Posterior cingulate gyrus (tissue), 11 donors: ENCODE measurements at regions of chr1 and their contacts with region 1.

Region 1: DNA sequence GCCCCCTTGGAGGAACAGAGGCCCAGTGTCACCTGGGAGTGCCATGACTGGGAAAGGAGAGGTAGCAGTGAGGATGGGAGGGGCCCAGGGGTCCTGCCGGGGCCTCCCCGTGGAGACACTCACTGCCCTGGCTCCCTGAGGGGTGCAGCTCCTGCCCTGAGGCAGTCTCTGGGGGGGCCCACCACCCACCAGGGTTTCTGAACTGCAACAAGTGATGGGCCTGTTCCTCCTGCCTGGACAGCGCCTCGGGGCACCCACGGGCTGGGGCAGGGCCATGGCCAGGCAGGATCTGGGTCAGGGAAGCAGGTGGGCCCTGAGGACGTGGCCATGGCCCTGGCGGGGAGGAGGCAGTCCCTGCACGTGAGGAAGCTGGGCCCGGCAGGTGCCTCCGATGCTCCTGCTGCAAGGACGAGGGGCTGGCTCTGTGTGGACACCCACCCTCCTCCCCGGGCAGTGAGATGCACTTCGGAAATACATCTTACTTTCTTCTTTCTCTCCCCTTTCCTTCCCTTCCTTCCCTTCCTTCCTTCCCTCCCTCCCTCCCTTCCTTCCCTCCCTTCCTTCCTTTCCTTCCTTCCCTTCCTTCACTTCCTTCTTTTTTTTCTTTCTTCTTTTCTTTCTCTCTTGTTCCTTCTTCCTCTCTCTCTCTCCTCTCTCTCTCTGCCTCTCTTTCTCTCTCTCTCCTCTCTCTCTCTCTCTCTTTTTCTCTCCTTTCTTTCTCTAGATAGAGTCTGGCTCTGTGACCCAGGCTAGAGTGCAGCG is 66.6 kb downstream of the MORN1 start:
- DNase-seq: no peak

Region 2: DNA sequence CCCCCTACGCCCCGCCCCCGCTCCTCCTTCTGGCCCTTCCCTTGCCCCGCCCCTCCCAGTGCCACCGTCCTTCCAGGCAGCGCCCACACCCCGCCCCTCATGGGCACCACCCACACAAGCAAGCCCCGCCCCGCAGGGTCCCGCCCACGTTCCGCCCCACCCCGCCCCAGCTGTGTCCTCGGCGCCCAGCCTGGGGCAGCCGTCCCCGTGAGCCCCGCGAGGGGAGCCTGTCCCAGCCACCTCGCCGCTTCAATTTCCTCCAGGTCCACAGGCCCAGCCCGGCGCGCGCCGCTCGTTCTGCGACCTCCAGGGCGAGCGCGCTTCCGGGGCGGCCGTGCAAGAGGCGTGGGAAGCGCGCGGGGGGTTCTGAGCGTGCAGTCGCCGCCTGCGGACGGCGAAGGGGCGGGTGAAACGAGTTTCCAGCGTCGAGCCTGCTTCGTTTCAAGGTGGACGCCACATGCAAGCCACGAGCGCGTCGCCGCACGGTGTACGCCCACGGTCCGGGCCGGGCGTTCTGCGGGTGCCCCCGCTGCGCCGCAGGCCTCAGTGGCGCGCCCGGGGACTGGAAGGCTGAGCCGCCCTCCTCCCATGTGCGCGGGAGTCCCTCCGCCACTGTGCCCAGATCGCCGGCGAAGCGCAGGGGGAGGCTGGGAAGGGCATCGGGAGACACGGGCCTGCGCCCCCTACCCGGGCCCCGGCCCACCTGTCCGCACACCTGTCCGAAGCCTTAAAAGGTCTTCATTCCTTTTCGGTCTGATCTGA is 119.4 kb before region 1 on chr1:
- intact Hi-C with region 1: no loop called
- DNase-seq: peak; percentile 88 to 99 (median 94)

Region 3: DNA sequence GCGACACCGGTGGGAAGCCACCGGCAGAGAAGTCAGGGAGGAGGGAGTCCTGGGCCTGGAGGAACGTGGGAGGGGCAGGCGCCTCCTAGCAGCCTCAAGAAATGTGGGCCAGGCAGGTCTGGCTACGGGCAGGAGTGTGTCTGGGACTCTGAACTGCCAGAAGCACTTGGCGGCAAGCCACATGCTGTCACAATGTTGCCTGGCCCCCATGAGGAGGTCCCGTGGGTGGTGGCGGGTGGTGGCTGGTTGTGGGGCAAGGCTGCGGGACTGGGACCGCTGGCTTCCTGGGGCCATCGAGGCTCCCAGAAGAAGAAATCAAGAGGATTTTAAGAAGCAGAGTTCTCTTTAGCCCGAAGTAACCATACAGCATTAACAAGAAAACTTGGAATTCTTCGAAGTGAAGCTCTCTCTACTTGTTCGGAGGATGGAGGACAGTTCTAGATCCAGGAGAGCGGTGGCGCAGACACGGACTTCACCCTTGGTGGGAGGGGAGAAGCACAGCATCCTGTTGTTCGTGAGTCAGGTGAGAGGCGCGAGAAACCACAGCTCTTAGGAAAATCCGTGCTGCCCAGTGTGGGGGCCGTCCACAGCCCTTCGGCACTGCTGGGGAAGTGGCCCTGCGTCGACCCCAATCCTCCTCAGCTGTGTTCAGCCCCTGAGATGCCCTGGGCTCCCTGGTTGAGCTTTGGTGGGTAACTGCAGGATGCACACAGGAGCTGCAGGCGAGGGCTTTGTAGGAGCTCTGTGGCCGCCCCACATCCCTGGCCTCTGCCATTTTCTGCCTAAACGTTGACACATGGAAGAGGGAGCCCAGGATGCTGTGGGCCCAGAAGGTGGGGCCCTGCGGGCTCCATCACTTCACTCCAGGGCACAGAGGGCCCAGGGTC is 84.3 kb before region 1 on chr1:
- intact Hi-C with region 1: no loop called
- DNase-seq: peak in 6 of 10 donors; percentile 57 to 92 (median 66)

Region 4: DNA sequence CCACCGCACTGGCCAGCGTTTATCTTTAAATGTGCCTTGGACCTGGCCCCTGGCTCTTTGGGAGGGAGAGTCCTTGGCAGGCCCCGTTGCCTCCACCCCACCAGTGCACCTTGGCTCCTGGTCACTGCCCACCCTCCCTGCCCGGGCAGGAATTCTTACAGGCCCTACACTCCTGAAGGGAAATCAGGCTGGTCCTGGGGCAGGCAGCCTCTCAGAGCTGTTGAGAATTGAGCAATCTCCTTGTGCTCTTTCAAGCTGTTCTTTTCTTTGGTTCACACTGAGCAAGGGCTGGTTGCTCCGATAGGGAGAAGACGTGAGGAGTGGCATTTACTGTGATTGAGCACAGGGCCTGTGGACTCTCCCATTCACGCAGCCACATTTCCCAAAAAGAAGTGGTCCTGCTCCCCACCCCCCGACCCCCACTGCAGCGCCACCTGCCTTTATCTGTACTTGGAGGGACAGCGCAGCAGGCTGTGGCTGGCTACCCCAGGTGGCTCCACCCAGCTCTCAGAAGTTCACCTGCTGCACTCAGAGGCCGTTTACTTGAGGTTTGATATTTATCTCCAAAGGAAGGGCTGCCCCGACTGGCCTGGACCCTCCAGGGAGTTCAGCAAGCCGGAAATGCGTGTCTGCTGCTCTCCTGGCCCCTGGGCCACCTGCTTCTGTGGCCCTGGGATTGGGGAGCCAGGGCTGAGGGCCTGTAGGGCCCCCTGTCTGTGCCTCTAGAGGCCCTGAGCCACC is 48.8 kb before region 1 on chr1:
- intact Hi-C with region 1: loop called (anchors 1 kb)
- DNase-seq: no peak

Region 5: DNA sequence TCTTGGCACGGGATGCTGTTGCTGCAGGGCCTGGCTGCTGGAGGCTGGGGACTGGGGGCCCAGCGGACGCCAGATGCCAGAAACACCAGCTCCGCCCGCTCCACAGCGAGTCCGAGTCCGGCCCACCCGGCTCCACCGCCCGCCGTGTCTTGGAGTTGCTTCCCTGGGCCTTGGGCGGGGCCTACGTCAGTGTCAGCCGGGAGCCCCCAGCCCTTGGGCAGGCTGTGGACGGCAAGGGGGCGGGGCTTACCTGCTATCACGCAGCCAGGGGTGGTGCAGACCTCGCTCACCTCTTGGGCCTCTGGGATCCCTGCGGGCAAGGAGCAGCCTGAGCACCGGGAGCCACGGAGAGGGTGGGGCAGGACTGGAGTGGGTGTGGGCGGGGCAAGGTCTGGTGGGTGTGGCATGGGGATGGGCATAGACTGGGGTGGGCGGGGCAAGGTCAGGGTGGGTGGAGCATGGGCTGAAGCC is 286.3 kb after region 1 on chr1:
- intact Hi-C with region 1: no loop called
- DNase-seq: peak in 5 of 10 donors; percentile 17 to 90 (median 73)